Motor neuron (in vitro differentiated cells): ENCODE measurements at regions of chr9 and their contacts with region 1.

Region 1: DNA sequence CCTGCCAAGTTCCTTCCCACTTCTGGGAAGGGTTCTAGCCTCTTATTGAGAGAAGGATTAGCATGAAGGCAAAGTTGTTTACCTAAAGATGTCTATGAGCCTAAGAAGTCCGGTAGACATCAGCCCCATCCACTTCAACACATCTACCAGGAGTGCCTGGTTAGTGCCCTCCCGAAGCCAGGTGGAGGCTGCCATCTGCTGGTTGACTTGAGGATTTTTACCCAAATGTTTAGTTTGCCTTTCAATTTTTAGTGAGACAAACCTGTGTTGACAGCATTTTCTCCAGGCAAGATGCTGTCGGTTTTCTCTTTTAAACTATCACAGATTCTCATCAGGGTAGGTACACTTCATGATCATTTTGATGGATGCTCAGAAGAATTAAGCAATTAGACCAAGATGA is 83.6 kb upstream of the TNFSF8 start:
- ATAC-seq: peak; percentile 47 to 85 (median 66)
- H3K4me3 ChIP-seq: no peak overlapping the region
- H3K27ac ChIP-seq: no peak overlapping the region
- H3K4me1 ChIP-seq: peaks cover 0 to 14% of the 10 kb centered on the region in 2 donors

Region 2: DNA sequence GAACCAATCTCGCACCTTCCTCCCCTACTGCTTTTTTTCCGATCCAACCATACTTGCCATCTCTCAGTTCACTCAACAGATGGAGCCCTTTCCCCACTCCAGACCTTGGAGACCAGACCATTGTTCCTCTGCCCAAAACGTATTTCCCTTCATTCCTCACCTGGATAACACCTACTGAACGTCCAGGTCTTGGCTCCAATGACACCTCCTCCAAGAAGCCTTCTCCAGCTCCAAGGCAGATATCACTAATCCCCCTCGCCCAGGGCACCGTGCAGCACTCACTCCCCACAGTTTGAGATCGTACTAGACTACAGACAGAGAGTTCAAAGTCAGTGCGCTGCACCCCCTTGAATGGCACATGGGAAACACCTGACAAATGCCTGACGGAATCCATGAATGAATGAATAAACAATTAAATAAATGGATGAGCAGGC is 579.1 kb before region 1 on chr9:
- in situ Hi-C with region 1: loop called in 2 of 9 experiments (anchors 25 kb)
- ATAC-seq: peak; percentile 35 to 89 (median 65)
- H3K4me3 ChIP-seq: no peak overlapping the region
- H3K27ac ChIP-seq: no peak overlapping the region
- H3K4me1 ChIP-seq: no peaks in the 10 kb centered on the region

Region 3: DNA sequence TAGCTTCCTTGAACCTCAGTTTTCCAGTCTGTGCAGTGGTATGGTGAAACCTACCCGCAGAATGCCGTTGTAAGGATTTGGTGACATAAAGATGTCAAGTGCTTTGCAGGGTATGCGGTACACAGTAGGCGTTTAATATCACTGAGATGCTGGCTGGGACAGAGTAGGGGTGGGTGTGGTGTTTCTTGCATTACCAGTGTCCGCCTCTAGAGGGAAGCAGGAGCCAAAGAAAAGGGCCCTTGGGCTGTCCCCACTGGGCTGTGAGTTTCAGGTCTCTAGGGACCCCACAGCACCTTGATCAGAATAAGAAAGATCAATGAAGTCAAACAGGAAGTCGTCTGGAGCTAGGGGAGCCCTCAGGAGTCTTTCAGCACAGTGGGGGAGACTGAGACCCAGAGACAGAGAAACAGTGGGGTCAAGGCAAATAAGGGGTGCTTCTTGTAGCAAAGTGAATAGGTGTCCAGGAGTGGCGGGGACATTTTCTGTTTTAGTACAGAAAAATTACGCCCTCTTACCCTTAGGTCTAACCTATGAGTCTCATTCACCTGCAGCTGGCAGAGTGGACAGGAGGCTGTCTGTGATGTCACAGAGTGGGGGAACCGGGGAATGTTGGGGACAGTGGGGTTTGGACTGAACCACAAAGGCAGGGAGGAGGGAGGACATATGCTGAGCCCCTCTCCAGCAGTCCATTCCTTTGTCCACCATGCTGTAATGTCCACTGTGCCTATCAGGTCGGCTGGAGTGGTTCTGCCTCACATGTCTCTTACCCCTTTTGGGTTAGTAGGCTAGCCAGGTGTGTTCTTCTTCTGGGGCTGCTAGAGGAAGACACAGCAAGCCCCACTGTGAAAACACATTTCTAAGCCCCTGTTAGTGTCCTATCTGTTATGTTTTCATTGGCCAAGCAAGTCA is 351.7 kb before region 1 on chr9:
- in situ Hi-C with region 1: loop called in 5 of 9 experiments (anchors 10 to 25 kb)
- ATAC-seq: peak; percentile 73 to 94 (median 84)
- H3K4me3 ChIP-seq: no peak overlapping the region
- H3K27ac ChIP-seq: no peak overlapping the region
- H3K4me1 ChIP-seq: no peaks in the 10 kb centered on the region

Region 4: GRCh38 chr9:114738581-114739316 is 275.2 kb before region 1 on chr9:
- in situ Hi-C with region 1: loop called in 1 of 9 experiments (anchors 25 kb)
- ATAC-seq: peak in 6 of 8 experiments; percentile 31 to 92 (median 82)
- H3K4me3 ChIP-seq: no peak overlapping the region
- H3K27ac ChIP-seq: no peak overlapping the region
- H3K4me1 ChIP-seq: no peaks in the 10 kb centered on the region

Region 5: DNA sequence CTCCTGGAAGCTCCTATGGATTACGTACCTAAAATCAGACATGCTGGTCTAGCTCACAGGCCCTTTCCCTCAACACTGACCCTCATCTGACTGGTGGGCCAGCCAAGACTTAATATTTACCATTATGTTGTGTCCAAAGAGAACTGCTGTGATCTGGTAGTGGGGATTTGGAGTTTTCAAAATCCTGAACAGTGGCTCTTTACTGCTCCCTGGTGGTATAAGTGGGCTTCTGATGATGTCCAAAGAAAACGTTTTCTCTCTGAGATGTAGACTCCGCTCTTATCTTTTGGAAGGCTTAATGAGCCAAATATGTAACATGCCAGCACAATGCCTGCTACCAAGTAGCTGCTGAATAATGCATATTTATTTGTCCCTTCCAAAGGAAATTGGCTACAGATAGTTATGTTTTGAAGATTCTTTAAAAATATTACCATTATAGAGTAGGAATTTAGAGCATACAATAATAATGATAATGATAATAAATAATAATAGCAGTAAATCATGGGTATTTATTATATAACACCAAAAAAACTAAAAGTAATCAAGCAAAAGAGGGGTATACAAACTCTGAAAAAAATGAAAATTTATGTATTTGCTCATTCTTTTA is 510.6 kb after region 1 on chr9:
- in situ Hi-C with region 1: loop called in 1 of 9 experiments (anchors 10 kb)
- ATAC-seq: peak; percentile 40 to 78 (median 66)
- H3K4me3 ChIP-seq: no peak overlapping the region
- H3K27ac ChIP-seq: no peak overlapping the region
- H3K4me1 ChIP-seq: no peaks in the 10 kb centered on the region